ENCODE measurements at regions of chr2 and their contacts with region 1.

Region 1: GRCh38 chr2:30072250-30072842 is 74.5 kb upstream of the YPEL5 start:
- DNase-seq: peak; percentile 57
- ATAC-seq: peak; percentile 98
- H3K4me3 ChIP-seq: no peak overlapping the region
- H3K27ac ChIP-seq: no peak overlapping the region
- H3K4me1 ChIP-seq: no peaks in the 10 kb centered on the region
- H3K27me3 ChIP-seq: peaks cover 23% of the 10 kb centered on the region
- CTCF ChIP-seq: peak; percentile 56 to 79 (median 79); a peak in 5 of 6 replicates
- POLR2A ChIP-seq: no peak
- RAD21 ChIP-seq: peak; percentile 81

Region 2: DNA sequence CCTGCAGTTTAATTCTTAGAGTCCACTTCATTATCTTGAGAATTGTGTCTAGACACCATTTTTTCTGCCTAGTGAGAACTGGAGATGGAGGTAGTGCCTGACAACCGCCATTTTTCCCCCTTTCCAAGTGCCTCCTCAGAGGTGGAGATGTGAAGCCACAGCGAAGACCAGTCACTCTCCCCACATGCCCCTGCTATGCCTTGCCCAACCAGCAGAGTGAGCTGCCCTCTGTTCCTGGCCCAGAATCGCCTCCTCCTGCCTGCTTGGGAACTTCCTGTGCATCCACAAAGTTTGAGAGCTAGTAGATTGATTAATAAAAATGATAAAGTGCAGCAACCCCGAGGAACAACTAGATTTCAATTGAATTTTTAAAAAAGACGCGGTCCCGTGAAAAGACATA is 833.8 kb before region 1 on chr2:
- CTCF ChIA-PET with region 1: interaction called, 3 read pairs
- POLR2A ChIA-PET with region 1: no interaction called
- RAD21 ChIA-PET with region 1: no interaction called
- intact Hi-C with region 1: loop called (anchors 5 kb)
- DNase-seq: peak; percentile 26
- ATAC-seq: peak; percentile 96
- H3K4me3 ChIP-seq: no peak overlapping the region
- H3K27ac ChIP-seq: no peak overlapping the region
- H3K4me1 ChIP-seq: no peaks in the 10 kb centered on the region
- H3K27me3 ChIP-seq: peaks cover 57% of the 10 kb centered on the region; the same call in 1 of the 2 replicates
- CTCF ChIP-seq: peak; percentile 58 to 91 (median 85); a peak in 5 of 6 replicates
- POLR2A ChIP-seq: no peak
- RAD21 ChIP-seq: peak; percentile 83

Region 3: DNA sequence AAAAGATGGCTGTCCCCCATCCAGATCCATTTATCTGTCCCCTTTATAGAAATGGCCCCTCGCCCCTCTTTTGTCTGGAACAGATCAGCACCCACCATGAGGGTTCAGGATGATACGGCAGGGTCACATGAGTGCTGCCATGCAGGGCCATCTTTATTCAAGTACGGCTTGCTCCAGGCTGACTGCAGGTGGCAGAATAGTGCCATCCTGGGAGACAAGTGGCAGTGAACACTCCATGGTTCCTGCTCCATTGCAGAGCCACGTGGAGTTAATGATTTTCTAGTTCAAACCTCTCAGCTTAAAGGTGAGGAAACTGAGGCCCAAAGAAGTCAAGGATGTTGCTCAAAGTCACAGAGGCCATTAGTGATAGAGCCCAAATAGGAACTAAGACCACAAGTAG is 776.5 kb before region 1 on chr2:
- CTCF ChIA-PET with region 1: no interaction called
- POLR2A ChIA-PET with region 1: no interaction called
- RAD21 ChIA-PET with region 1: no interaction called
- intact Hi-C with region 1: loop called (anchors 2 kb)
- DNase-seq: peak; percentile 18
- ATAC-seq: peak; percentile 78
- H3K4me3 ChIP-seq: no peak overlapping the region
- H3K27ac ChIP-seq: no peak overlapping the region
- H3K4me1 ChIP-seq: no peaks in the 10 kb centered on the region
- H3K27me3 ChIP-seq: peaks cover 77% of the 10 kb centered on the region
- CTCF ChIP-seq: peak; percentile 25 to 47 (median 34); a peak in 4 of 6 replicates
- POLR2A ChIP-seq: no peak
- RAD21 ChIP-seq: peak; percentile 61

Region 4: DNA sequence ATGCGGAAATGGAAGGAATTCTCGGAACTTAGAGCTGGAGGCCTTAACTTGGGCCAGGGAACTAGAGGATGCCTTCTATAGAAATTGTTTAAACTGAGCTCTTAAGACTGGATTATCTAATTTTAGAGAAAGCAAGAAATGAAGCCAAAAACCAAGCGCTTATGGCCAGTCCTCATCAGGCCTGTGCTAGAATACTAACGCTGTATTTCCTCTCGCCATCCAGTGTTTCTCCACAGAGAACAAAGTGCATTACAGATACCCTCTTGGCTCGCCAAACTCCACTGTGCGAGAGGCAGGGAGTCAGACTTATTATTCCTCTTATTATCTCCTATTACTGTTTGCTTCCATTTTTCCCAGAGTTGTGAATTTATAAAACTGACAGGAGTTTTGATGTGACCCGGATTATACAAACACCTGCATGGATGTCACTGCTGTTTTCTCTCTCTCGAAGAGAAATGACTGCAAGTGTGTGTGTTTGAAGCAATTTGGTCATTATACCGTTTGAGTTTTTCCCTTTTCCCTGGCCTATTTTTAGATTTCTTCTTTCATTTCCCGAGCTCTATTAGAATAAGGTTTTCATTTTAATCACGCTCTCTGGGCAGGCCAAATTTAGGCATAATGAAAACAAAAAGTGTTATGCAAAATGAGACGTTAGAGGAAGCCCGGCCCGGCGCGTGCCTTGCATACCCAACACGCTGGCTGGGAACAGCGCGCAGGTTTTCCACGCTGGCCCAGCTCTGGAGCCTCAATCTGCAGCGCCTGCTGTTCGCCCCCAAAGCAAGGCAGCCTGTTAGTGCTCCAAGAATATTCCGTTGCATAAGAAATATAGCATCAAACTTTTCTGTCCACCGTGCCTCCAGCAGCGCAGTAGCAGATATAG is 254.3 kb before region 1 on chr2:
- CTCF ChIA-PET with region 1: no interaction called
- POLR2A ChIA-PET with region 1: no interaction called
- RAD21 ChIA-PET with region 1: no interaction called
- intact Hi-C with region 1: no loop called
- DNase-seq: no peak
- ATAC-seq: no peak
- H3K4me3 ChIP-seq: no peak overlapping the region
- H3K27ac ChIP-seq: no peak overlapping the region
- H3K4me1 ChIP-seq: no peaks in the 10 kb centered on the region
- H3K27me3 ChIP-seq: peaks cover 63% of the 10 kb centered on the region
- CTCF ChIP-seq: no peak
- POLR2A ChIP-seq: no peak
- RAD21 ChIP-seq: no peak

Region 5: GRCh38 chr2:29841386-29842004 is 230.9 kb before region 1 on chr2:
- CTCF ChIA-PET with region 1: no interaction called
- POLR2A ChIA-PET with region 1: no interaction called
- RAD21 ChIA-PET with region 1: no interaction called
- intact Hi-C with region 1: loop called (anchors 5 kb)
- DNase-seq: peak; percentile 3
- ATAC-seq: peak; percentile 78
- H3K4me3 ChIP-seq: no peak overlapping the region
- H3K27ac ChIP-seq: no peak overlapping the region
- H3K4me1 ChIP-seq: no peaks in the 10 kb centered on the region
- H3K27me3 ChIP-seq: peaks cover 54% of the 10 kb centered on the region
- CTCF ChIP-seq: peak; percentile 48 to 90 (median 86); a peak in 5 of 6 replicates
- POLR2A ChIP-seq: no peak
- RAD21 ChIP-seq: peak; percentile 77

Region 6: DNA sequence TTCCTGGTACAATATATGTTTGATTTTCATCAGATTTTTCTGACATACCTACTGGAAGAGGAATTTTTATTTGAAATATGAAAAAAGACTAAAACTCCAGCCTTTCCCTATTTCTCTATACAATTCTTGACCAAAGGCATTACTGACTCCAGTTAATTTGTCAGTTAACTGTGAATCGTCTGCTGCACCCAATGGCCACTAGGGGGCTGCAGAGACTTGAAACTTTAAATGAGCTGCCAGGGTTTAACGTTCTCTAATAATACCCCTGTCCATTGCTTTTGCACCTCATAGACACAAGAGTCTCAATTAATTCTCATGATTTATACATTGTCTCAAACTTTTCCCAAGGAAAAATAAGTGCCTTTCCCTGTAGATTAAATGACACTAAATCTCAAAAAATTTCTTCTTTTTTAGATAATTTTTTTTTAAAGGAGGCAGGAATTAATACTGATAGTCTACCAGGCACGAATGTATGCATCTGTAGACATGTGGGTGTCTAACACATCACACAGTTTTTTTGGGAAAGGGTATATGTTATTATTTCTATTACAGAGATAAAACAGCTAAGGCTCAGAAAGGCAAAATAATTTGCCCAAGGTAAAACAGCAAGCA is 149.1 kb before region 1 on chr2:
- CTCF ChIA-PET with region 1: interaction called, 18 read pairs
- POLR2A ChIA-PET with region 1: no interaction called
- RAD21 ChIA-PET with region 1: interaction called, 3 to 7 read pairs
- intact Hi-C with region 1: loop called (anchors 1 kb)
- DNase-seq: peak; percentile 42
- ATAC-seq: peak; percentile 87
- H3K4me3 ChIP-seq: no peak overlapping the region
- H3K27ac ChIP-seq: no peak overlapping the region
- H3K4me1 ChIP-seq: no peaks in the 10 kb centered on the region
- H3K27me3 ChIP-seq: peaks cover 17% of the 10 kb centered on the region
- CTCF ChIP-seq: peak; percentile 74 to 92 (median 88)
- POLR2A ChIP-seq: no peak
- RAD21 ChIP-seq: peak; percentile 76

Measured in HCT116 (cell line).